Spleen (tissue), 13 donors: ENCODE measurements at regions of chr14 and their contacts with region 1.

Region 1: GRCh38 chr14:54642801-54643697 is 76.1 kb downstream of the SAMD4A start:
- DNase-seq: no peak
- H3K4me3 ChIP-seq: no peak overlapping the region
- H3K27ac ChIP-seq: no peak overlapping the region
- H3K4me1 ChIP-seq: peaks cover 0 to 14% (median 4%) of the 10 kb centered on the region in 6 donors
- H3K27me3 ChIP-seq: no peaks in the 10 kb centered on the region
- CTCF ChIP-seq: peak in 5 of 11 experiments; percentile 14 to 26 (median 19)
- POLR2A ChIP-seq: no peak

Region 2: DNA sequence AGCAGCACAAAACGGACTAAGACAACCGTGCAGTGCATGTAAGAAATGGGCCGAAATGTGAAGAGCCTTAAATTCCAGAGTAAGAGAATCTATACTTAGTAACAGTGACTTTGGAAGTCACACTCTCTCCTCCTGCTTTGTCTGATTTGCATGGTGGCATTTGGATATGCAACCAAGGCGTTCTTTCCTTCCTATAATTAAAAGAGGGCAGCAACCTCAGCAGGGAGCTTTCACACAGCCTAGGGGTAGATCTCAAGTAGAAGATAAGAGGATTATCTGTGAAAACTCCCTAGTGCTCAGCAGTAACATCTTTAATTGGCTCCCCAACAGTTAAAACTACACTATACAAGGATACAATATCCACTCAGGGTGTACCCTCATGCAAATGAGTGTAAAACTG is 170.7 kb before region 1 on chr14:
- intact Hi-C with region 1: no loop called
- DNase-seq: no peak
- H3K4me3 ChIP-seq: no peak overlapping the region
- H3K27ac ChIP-seq: no peak overlapping the region
- H3K4me1 ChIP-seq: no peaks in the 10 kb centered on the region
- H3K27me3 ChIP-seq: no peaks in the 10 kb centered on the region
- CTCF ChIP-seq: no peak
- POLR2A ChIP-seq: no peak

Region 3: GRCh38 chr14:54572316-54572715 is 70.7 kb before region 1 on chr14:
- intact Hi-C with region 1: loop called (anchors 10 kb)
- DNase-seq: no peak
- H3K4me3 ChIP-seq: no peak overlapping the region
- H3K27ac ChIP-seq: no peak overlapping the region
- H3K4me1 ChIP-seq: peaks cover 7 to 42% (median 31%) of the 10 kb centered on the region in 6 donors
- H3K27me3 ChIP-seq: peaks cover 0 to 22% (median 0%) of the 10 kb centered on the region in 7 donors
- CTCF ChIP-seq: peak in 6 of 11 experiments; percentile 12 to 44 (median 21)
- POLR2A ChIP-seq: no peak

Region 4: GRCh38 chr14:54773171-54773975 is 130.3 kb after region 1 on chr14:
- intact Hi-C with region 1: no loop called
- DNase-seq: peak; percentile 84
- H3K4me3 ChIP-seq: peak overlapping the region in 1 of 8 donors; percentile 23
- H3K27ac ChIP-seq: peak overlapping the region; percentile 51 to 80 (median 74)
- H3K4me1 ChIP-seq: peaks cover 25 to 59% (median 40%) of the 10 kb centered on the region in 6 donors
- H3K27me3 ChIP-seq: no peaks in the 10 kb centered on the region
- CTCF ChIP-seq: peak in 9 of 11 experiments; percentile 35 to 79 (median 50)
- POLR2A ChIP-seq: no peak